ENCODE measurements at regions of chr3 and their contacts with region 1.

Region 1: DNA sequence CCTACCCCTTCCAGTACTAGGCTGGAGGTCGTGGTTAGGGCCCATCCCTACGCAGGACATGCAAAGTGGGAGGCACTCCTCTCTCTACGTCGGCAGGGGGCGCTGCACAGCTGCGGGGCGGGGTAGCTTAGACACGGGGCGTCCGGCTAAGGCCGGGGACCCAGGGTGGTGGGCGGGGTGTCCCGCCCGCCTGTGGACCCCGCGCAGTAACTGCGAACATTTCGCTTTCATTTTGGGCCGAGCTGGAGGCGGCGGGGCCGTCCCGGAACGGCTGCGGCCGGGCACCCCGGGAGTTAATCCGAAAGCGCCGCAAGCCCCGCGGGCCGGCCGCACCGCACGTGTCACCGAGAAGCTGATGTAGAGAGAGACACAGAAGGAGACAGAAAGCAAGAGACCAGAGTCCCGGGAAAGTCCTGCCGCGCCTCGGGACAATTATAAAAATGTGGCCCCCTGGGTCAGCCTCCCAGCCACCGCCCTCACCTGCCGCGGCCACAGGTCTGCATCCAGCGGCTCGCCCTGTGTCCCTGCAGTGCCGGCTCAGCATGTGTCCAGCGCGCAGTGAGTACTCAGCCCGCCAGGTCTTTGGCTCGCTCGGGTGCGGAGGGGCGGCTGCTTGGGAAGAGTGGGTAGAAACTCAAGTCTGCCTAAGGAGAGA is at the start of gene IL12A:
- DNase-seq: peak; percentile 91
- CTCF ChIP-seq: peak; percentile 95

Region 2: GRCh38 chr3:159854500-159855124 is 134.1 kb before region 1 on chr3:
- CTCF ChIA-PET with region 1: no interaction called
- POLR2A ChIA-PET with region 1: no interaction called
- DNase-seq: no peak
- CTCF ChIP-seq: no peak

Region 3: GRCh38 chr3:159892171-159892795 is 96.5 kb before region 1 on chr3:
- CTCF ChIA-PET with region 1: interaction called, 104 read pairs
- POLR2A ChIA-PET with region 1: no interaction called
- DNase-seq: no peak
- CTCF ChIP-seq: no peak

Region 4: DNA sequence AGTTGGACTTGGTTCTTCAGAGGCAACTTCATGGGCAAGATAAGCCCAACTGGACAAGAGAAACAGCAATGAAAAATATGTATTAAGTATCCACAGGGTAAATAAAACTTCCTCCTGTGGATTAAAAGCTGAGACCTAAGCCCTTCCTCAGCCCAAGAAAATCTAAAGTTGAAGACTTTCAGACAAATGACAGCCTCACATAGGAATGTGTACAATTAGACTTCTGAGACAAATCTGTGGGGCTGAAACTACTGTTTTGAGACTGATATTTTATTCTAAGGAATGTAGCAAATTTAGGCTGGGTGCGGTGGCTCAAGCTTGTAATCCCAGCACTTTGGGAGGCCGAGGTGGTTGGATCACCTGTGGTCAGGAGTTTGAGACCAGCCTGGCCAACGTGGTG is 74.3 kb before region 1 on chr3:
- CTCF ChIA-PET with region 1: interaction called, 12 read pairs
- POLR2A ChIA-PET with region 1: no interaction called
- DNase-seq: no peak
- CTCF ChIP-seq: no peak

Region 5: DNA sequence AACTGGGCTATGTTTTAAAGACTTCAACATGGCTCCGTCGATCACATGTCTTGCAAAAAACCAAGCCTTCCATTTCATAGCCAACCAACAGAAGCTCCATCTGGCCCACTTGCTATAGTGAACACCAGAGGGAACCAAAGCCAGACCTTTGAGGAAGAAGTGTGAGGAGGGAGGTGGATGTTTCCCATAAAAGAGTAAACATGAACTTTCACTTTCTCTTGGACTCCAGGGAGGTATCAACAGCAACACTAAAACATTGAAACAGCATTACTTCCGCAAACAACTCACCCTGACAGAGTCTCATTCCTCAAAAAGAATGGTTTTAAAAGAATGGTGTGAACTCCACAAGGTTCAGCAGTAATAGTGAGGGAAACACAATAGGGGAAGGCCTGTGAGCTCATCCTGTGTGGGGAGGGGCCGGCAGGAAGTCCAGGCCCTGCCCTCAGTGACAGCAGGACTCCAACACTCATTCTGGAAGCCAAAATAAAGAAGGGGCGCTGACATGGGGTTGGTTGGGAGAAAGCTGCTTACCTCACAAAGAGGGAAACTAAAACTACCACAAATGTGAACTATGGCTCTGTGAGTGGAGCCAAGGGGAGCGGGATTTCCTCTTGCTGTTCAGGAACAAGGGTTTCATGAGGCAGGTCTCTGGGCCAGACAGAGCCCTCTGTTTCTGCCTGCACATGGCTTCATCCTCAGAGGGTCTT is 59.2 kb before region 1 on chr3:
- CTCF ChIA-PET with region 1: interaction called, 23 read pairs
- POLR2A ChIA-PET with region 1: no interaction called
- DNase-seq: peak; percentile 55
- CTCF ChIP-seq: peak; percentile 46

Region 6: GRCh38 chr3:159953325-159954085 is 35.2 kb before region 1 on chr3:
- CTCF ChIA-PET with region 1: interaction called, 17 read pairs
- POLR2A ChIA-PET with region 1: no interaction called
- DNase-seq: no peak
- CTCF ChIP-seq: no peak

Region 7: DNA sequence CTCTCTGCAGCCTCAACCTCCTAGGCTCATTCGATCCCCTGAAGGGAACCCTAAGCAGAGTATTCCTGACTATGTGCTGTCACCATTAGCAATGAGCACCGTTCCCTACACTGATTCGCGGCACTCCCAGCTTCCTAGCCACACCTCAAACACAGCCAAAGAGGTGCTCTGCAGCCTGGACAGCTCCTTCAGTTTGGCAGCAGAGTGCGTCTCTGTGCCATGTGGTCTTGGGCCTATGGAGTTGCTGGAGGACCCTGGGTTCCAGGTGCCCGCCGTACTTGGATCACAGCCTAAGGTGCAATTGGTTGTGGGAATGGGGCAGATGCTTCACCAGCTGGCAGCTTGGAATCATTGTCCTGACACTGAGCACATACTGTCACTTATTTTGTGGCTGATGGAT is 17.4 kb before region 1 on chr3:
- CTCF ChIA-PET with region 1: interaction called, 76 read pairs
- POLR2A ChIA-PET with region 1: no interaction called
- DNase-seq: no peak
- CTCF ChIP-seq: no peak

Region 8: GRCh38 chr3:160003520-160004128 is 14.9 kb after region 1 on chr3:
- CTCF ChIA-PET with region 1: interaction called, 273 read pairs
- POLR2A ChIA-PET with region 1: no interaction called
- DNase-seq: peak; percentile 60
- CTCF ChIP-seq: peak; percentile 84